Activated CD4-positive, alpha-beta memory T cell treated with anti-CD3 and anti-CD28 coated beads for 36 hours (primary cell): ENCODE measurements at regions of chr16 and their contacts with region 1.

Region 1: GRCh38 chr16:23650674-23651416 is 9.6 kb downstream of the DCTN5 start:
- DNase-seq: peak; percentile 34
- H3K4me3 Mint-ChIP-seq: no peak overlapping the region
- H3K27ac Mint-ChIP-seq: peak overlapping the region; percentile 67
- H3K4me1 Mint-ChIP-seq: peaks cover 37% of the 10 kb centered on the region
- H3K27me3 Mint-ChIP-seq: no peaks in the 10 kb centered on the region

Region 2: DNA sequence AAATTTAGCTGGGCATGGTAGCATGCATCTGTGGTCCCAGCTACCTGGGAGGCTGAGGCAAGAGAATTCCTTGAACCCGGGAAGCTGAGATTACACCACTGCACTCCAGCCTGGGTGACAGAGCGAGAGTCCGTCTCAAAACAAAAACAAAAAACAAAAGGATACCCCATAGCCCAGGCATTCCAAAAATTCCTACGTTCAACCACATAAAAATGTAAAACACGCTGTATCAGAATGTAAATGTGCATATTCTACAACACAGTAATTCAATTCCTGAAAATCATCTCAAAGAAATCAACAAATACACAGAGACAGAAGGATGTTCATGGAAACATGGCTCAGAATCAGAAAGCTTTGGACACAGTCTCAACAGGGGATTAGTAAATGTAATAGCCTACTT is 230.9 kb before region 1 on chr16:
- CTCF ChIA-PET with region 1: no interaction called
- POLR2A ChIA-PET with region 1: no interaction called
- intact Hi-C with region 1: no loop called
- DNase-seq: no peak
- H3K4me3 Mint-ChIP-seq: no peak overlapping the region
- H3K27ac Mint-ChIP-seq: no peak overlapping the region
- H3K4me1 Mint-ChIP-seq: no peaks in the 10 kb centered on the region
- H3K27me3 Mint-ChIP-seq: no peaks in the 10 kb centered on the region

Region 3: GRCh38 chr16:23629516-23629915 is 21.3 kb before region 1 on chr16:
- CTCF ChIA-PET with region 1: no interaction called
- POLR2A ChIA-PET with region 1: no interaction called
- intact Hi-C with region 1: no loop called
- DNase-seq: no peak
- H3K4me3 Mint-ChIP-seq: no peak overlapping the region
- H3K27ac Mint-ChIP-seq: no peak overlapping the region
- H3K4me1 Mint-ChIP-seq: peaks cover 5% of the 10 kb centered on the region
- H3K27me3 Mint-ChIP-seq: no peaks in the 10 kb centered on the region

Region 4: GRCh38 chr16:23670137-23670776 is 19.4 kb after region 1 on chr16:
- CTCF ChIA-PET with region 1: interaction called, 6 read pairs
- POLR2A ChIA-PET with region 1: interaction called, 5 read pairs
- intact Hi-C with region 1: loop called (anchors 1 kb)
- DNase-seq: peak; percentile 84
- H3K4me3 Mint-ChIP-seq: no peak overlapping the region
- H3K27ac Mint-ChIP-seq: peak overlapping the region; percentile 44
- H3K4me1 Mint-ChIP-seq: peaks cover 19% of the 10 kb centered on the region
- H3K27me3 Mint-ChIP-seq: no peaks in the 10 kb centered on the region